ENCODE measurements at regions of chr12 and their contacts with region 1.

Region 1: DNA sequence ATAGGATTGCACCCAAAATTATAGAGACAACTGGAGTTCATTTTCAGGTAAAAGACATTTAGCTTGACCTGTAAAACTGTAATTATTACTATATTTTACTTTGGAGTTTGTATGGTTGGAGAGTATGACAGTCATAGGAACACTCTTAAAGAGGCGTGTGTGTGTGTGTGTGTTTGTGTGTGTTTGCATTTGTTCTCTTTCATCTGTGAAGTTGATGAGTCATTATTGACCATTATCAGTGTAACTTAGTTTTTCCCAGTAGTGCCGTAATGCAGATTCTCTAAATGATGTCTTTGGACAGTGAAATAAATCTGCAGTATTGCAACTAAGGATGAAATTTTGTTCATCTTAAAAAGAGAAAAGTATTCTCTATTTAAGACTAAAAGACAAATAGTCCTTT is 13.0 kb downstream of the WASHC4 start:
- DNase-seq: no peak
- H3K4me3 ChIP-seq: no peak overlapping the region
- H3K27ac ChIP-seq: no peak overlapping the region
- H3K4me1 ChIP-seq: no peaks in the 10 kb centered on the region
- H3K27me3 ChIP-seq: no peaks in the 10 kb centered on the region
- CTCF ChIP-seq: no peak
- POLR2A ChIP-seq: no peak

Region 2: GRCh38 chr12:105158876-105159275 is 38.3 kb after region 1 on chr12:
- CTCF ChIA-PET with region 1: no interaction called
- POLR2A ChIA-PET with region 1: no interaction called
- dilution Hi-C with region 1: no loop called
- intact Hi-C with region 1: loop called (anchors 5 kb)
- DNase-seq: no peak
- H3K4me3 ChIP-seq: no peak overlapping the region
- H3K27ac ChIP-seq: no peak overlapping the region
- H3K4me1 ChIP-seq: no peaks in the 10 kb centered on the region
- H3K27me3 ChIP-seq: no peaks in the 10 kb centered on the region
- CTCF ChIP-seq: no peak
- POLR2A ChIP-seq: no peak

Region 3: DNA sequence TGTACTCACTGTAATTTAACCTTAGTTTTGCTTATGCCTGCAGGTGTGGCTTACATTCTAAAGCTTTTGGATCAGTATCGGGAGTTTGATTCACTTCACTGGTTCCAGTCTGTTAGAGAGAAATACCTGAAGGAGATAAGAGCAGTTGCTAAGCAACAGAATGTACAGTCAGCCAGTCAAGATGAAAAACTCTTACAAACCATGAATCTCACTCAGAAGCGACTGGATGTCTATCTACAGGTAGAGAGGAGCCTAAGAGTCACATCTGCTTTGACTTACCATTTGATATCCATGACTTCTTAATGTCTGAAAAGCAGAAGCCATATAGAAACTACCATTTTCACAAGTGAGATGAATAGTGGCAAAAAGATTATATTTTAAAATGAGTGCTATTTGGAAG is 43.5 kb after region 1 on chr12:
- CTCF ChIA-PET with region 1: no interaction called
- POLR2A ChIA-PET with region 1: no interaction called
- dilution Hi-C with region 1: no loop called
- intact Hi-C with region 1: loop called (anchors 5 kb)
- DNase-seq: no peak
- H3K4me3 ChIP-seq: no peak overlapping the region
- H3K27ac ChIP-seq: no peak overlapping the region
- H3K4me1 ChIP-seq: no peaks in the 10 kb centered on the region
- H3K27me3 ChIP-seq: no peaks in the 10 kb centered on the region
- CTCF ChIP-seq: no peak
- POLR2A ChIP-seq: no peak

Measured in endothelial cell of umbilical vein (primary cell).